ENCODE measurements at regions of chr16 and their contacts with region 1.

Region 1: DNA sequence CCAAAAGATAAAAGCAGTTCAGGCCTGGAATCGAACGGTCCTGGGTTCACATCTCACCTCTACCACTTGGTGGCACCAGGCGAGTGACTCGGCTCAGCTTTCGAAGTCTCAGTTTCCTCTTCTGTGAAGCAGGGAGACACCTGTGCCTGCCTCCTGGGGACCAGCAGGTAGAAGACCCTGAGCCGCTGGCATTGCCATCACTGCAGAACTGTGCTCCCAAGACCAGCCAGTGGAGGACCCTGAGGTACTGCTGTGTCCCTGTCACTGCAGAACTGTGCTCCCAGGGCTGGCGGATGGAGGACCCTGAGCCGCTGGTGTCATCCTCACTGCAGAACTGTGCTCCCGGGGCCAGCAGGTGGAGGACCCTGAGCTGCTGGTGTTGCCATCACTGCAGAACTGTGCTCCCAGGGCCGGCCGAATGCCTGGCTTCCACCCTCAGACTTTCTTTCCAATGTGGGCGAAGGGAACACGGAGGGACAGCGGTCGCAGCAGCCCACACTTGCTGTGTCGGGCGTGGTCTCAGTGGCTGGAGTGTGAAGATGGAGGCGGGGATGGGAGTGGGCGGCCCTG is 8.7 kb upstream of the SLC7A5 start:
- DNase-seq: no peak
- ATAC-seq: peak; percentile 8
- H3K4me3 ChIP-seq: no peak overlapping the region
- H3K4me3 Mint-ChIP-seq: no peak overlapping the region
- H3K27ac ChIP-seq: no peak overlapping the region
- H3K27ac Mint-ChIP-seq: peak overlapping the region in 2 of 9 donors; percentile 36 to 65
- H3K4me1 ChIP-seq: no peaks in the 10 kb centered on the region
- H3K4me1 Mint-ChIP-seq: peaks cover 0 to 35% (median 6%) of the 10 kb centered on the region in 7 donors
- H3K27me3 ChIP-seq: no peaks in the 10 kb centered on the region
- H3K27me3 Mint-ChIP-seq: peaks cover 0 to 8% (median 0%) of the 10 kb centered on the region in 5 donors

Region 2: GRCh38 chr16:87895641-87896141 is 17.7 kb after region 1 on chr16:
- CTCF ChIA-PET with region 1: interaction called, 9 read pairs
- POLR2A ChIA-PET with region 1: no interaction called
- intact Hi-C with region 1: loop called in 1 of 2 experiments (anchors 1 kb)
- DNase-seq: peak in 4 of 9 donors; percentile 20 to 80 (median 28)
- ATAC-seq: peak; percentile 86
- H3K4me3 ChIP-seq: peak overlapping the region; percentile 22
- H3K4me3 Mint-ChIP-seq: peak overlapping the region in 8 of 10 donors; percentile 53 to 84 (median 60)
- H3K27ac ChIP-seq: peak overlapping the region; percentile 21
- H3K27ac Mint-ChIP-seq: peak overlapping the region in 8 of 9 donors; percentile 69 to 98 (median 86)
- H3K4me1 ChIP-seq: peaks cover 33 to 37% of the 10 kb centered on the region in 2 donors
- H3K4me1 Mint-ChIP-seq: peaks cover 21 to 50% (median 35%) of the 10 kb centered on the region in 7 donors
- H3K27me3 ChIP-seq: no peaks in the 10 kb centered on the region
- H3K27me3 Mint-ChIP-seq: no peaks in the 10 kb centered on the region

Measured in naive thymus-derived CD4-positive, alpha-beta T cell (primary cell).